Activated CD8-positive, alpha-beta T cell treated with anti-CD3 and anti-CD28 coated beads, Interleukin-2, amount 10 ng/mL, durations not matched to agents 7 days and 5 days (primary cell): ENCODE measurements at regions of chr20 and their contacts with region 1.

Region 1: GRCh38 chr20:38805502-38805957 is at the start of gene PPP1R16B:
- DNase-seq: peak; percentile 91
- ATAC-seq: peak; percentile 83
- H3K4me3 Mint-ChIP-seq: peak within 1 kb of the TSS; percentile 88
- H3K27ac Mint-ChIP-seq: peak within 1 kb of the TSS; percentile 99
- H3K4me1 Mint-ChIP-seq: peaks cover 67% of the 10 kb centered on the region
- H3K27me3 Mint-ChIP-seq: no peaks in the 10 kb centered on the region
- total RNA-seq, gene PPP1R16B: 63.4 to 65.1 TPM

Region 2: DNA sequence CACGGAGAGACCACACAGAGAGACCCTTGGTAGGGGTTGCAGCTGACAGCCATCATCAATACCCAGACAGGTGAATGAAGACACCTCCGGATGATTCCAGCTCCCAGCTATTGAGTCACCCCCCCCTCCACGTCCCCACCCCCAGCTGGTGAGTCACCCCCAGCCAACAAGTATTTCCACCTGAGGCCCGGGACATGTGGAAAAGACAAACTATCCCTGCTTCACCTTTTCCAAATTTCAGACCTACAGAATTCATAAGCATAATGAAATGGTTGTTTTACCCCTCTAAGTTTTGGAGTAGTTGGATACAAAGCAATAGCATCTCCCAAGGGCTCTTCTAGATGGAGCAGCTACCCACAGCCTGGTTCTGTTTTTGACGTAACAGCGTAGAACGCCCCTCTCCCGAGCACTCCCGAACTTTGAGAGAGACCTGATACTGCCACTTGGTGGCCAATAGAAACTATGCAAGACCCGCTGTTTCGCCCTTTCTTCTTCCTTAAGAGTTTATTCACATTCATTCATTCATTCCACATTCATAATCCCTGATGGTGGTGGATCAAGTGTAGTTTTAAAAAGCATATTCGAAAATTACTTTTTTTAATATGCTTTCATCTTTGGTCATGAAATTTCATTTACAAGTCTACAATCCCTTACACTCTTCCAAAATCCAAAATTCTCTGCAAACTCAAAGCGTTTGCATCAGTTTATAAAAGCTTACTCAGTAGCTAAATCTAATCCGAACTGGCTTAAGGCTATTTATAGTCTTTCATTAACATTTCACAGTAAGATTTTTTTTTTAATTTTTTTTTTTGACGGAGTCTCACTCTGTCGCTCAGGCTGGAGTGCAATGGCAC is 15.1 kb before region 1 on chr20:
- CTCF ChIA-PET with region 1: interaction called, 33 read pairs
- POLR2A ChIA-PET with region 1: interaction called, 4 read pairs
- DNase-seq: peak; percentile 63
- ATAC-seq: peak; percentile 51
- H3K4me3 Mint-ChIP-seq: no peak overlapping the region
- H3K27ac Mint-ChIP-seq: no peak overlapping the region
- H3K4me1 Mint-ChIP-seq: peaks cover 21% of the 10 kb centered on the region
- H3K27me3 Mint-ChIP-seq: peaks cover 4% of the 10 kb centered on the region

Region 3: DNA sequence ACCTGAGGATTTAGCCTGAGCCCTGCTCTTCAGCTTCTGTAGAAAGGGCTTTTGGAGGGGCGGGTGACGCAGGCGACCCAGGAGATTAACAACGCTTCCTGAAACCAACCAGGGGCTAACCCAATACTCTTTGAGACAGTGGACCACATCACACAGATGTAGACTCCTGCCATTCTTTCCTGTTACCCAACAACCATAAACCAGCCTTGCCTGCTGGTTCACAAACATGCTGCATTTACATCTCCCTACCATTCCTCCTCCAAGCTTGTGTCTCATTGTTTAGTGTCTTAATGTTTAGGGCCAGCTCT is 28.3 kb after region 1 on chr20:
- CTCF ChIA-PET with region 1: interaction called, 10 read pairs
- POLR2A ChIA-PET with region 1: interaction called, 12 read pairs
- DNase-seq: peak; percentile 50
- ATAC-seq: peak; percentile 70
- H3K4me3 Mint-ChIP-seq: peak overlapping the region; percentile 24
- H3K27ac Mint-ChIP-seq: peak overlapping the region; percentile 53
- H3K4me1 Mint-ChIP-seq: peaks cover 54% of the 10 kb centered on the region
- H3K27me3 Mint-ChIP-seq: no peaks in the 10 kb centered on the region

Region 4: GRCh38 chr20:38875175-38875993 is 69.9 kb after region 1 on chr20:
- CTCF ChIA-PET with region 1: interaction called, 59 read pairs
- POLR2A ChIA-PET with region 1: interaction called, 82 read pairs
- DNase-seq: peak; percentile 80
- ATAC-seq: peak; percentile 53
- H3K4me3 Mint-ChIP-seq: peak overlapping the region; percentile 80
- H3K27ac Mint-ChIP-seq: peak overlapping the region; percentile 89
- H3K4me1 Mint-ChIP-seq: peaks cover 91% of the 10 kb centered on the region
- H3K27me3 Mint-ChIP-seq: no peaks in the 10 kb centered on the region

Region 5: DNA sequence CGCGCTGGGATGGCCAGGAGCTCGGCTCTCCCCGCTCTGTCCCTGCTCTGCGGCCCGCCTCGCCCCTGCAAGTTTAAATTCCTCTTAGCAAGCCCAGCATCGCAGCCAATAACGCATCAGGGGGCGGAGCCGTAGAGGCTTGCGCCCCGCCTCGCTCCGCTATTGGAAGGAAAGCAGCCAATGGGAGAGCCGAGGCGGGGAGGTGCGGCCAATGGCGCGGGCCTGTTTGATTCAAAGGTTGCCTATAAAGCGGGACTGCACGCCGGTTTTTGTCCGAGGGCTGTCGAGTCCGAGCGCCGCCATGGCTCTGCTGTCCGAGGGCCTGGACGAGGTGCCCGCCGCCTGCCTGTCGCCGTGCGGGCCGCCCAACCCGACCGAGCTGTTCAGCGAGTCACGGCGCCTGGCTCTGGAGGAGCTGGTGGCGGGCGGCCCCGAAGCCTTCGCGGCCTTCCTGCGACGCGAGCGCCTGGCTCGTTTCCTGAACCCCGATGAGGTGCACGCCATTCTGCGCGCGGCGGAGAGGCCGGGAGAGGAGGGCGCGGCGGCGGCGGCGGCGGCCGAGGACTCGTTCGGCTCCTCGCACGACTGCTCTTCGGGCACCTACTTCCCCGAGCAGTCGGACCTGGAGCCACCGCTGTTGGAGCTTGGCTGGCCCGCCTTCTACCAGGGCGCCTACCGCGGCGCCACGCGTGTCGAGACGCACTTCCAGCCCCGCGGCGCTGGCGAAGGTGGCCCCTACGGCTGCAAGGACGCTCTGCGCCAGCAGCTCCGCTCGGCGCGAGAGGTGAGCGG is 120.8 kb after region 1 on chr20 and contains the start of gene FAM83D:
- CTCF ChIA-PET with region 1: interaction called, 6 read pairs
- POLR2A ChIA-PET with region 1: interaction called, 15 read pairs
- DNase-seq: peak; percentile 98
- ATAC-seq: peak; percentile 95
- H3K4me3 Mint-ChIP-seq: peak within 1 kb of the TSS; percentile 91
- H3K27ac Mint-ChIP-seq: peak within 1 kb of the TSS; percentile 84
- H3K4me1 Mint-ChIP-seq: peaks cover 38% of the 10 kb centered on the region
- H3K27me3 Mint-ChIP-seq: no peaks in the 10 kb centered on the region
- total RNA-seq, gene FAM83D: 24.9 to 25.6 TPM